Endothelial cell of umbilical vein (primary cell): ENCODE measurements at regions of chr12 and their contacts with region 1.

Region 1: DNA sequence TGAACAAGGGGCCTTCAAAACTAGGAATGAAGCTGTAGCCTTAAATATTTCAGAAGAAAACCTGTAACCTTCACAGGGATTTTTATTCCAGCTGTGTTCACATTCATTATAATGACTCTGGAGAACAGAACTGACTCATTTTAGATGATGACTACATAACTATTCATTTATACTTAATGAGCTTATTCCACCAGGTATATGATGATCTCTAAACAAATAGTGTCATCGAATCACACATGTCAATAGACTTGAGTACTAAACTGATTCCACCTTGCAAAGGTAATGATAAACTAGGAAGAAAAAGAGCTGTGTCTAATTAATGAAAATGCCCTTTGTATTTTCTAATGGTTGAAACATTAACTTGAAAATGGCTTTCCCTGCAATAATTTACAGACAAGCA is 433.2 kb downstream of the PDZRN4 start:
- DNase-seq: no peak
- H3K4me3 ChIP-seq: no peak overlapping the region
- H3K27ac ChIP-seq: no peak overlapping the region
- H3K4me1 ChIP-seq: no peaks in the 10 kb centered on the region
- H3K27me3 ChIP-seq: peaks cover 0 to 1% of the 10 kb centered on the region in 2 experiments
- CTCF ChIP-seq: no peak
- POLR2A ChIP-seq: no peak

Region 2: GRCh38 chr12:41302979-41303403 is 318.3 kb before region 1 on chr12:
- CTCF ChIA-PET with region 1: no interaction called
- POLR2A ChIA-PET with region 1: no interaction called
- dilution Hi-C with region 1: no loop called
- intact Hi-C with region 1: loop called (anchors 10 kb)
- DNase-seq: no peak
- H3K4me3 ChIP-seq: no peak overlapping the region
- H3K27ac ChIP-seq: no peak overlapping the region
- H3K4me1 ChIP-seq: no peaks in the 10 kb centered on the region
- H3K27me3 ChIP-seq: no peaks in the 10 kb centered on the region
- CTCF ChIP-seq: no peak
- POLR2A ChIP-seq: no peak